ENCODE measurements at regions of chr10 and their contacts with region 1.

Region 1: GRCh38 chr10:11724938-11725776 is 17.0 kb upstream of the ECHDC3 start:
- DNase-seq: no peak
- ATAC-seq: peak in 3 of 4 donors; percentile 72 to 86 (median 85)
- H3K4me3 ChIP-seq: no peak overlapping the region
- H3K27ac ChIP-seq: no peak overlapping the region
- H3K4me1 ChIP-seq: peaks cover 0 to 5% (median 0%) of the 10 kb centered on the region in 12 donors
- H3K27me3 ChIP-seq: no peaks in the 10 kb centered on the region
- CTCF ChIP-seq: peak; percentile 59 to 79 (median 72)
- POLR2A ChIP-seq: no peak

Region 2: GRCh38 chr10:11515596-11516430 is 209.3 kb before region 1 on chr10:
- intact Hi-C with region 1: loop called (anchors 1 to 5 kb)
- DNase-seq: peak in 4 of 5 donors; percentile 29 to 41 (median 36)
- ATAC-seq: peak in 3 of 4 donors; percentile 76 to 90 (median 86)
- H3K4me3 ChIP-seq: no peak overlapping the region
- H3K27ac ChIP-seq: no peak overlapping the region
- H3K4me1 ChIP-seq: peaks cover 0 to 15% (median 3%) of the 10 kb centered on the region in 12 donors
- H3K27me3 ChIP-seq: no peaks in the 10 kb centered on the region
- CTCF ChIP-seq: peak; percentile 67 to 95 (median 86)
- POLR2A ChIP-seq: no peak

Measured in heart left ventricle (tissue), 16 donors.